ENCODE measurements at regions of chr2 and their contacts with region 1.

Region 1: GRCh38 chr2:174174741-174175140 is 73.6 kb downstream of the OLA1 start:
- DNase-seq: no peak
- ATAC-seq: no peak
- H3K4me3 ChIP-seq: no peak overlapping the region
- H3K27ac ChIP-seq: no peak overlapping the region
- H3K4me1 ChIP-seq: no peaks in the 10 kb centered on the region
- H3K27me3 ChIP-seq: no peaks in the 10 kb centered on the region
- CTCF ChIP-seq: no peak

Region 2: GRCh38 chr2:174198822-174199564 is 24.3 kb after region 1 on chr2:
- CTCF ChIA-PET with region 1: interaction called, 14 read pairs
- POLR2A ChIA-PET with region 1: no interaction called
- intact Hi-C with region 1: no loop called
- DNase-seq: peak; percentile 18
- ATAC-seq: peak; percentile 83
- H3K4me3 ChIP-seq: no peak overlapping the region
- H3K27ac ChIP-seq: no peak overlapping the region
- H3K4me1 ChIP-seq: no peaks in the 10 kb centered on the region
- H3K27me3 ChIP-seq: no peaks in the 10 kb centered on the region
- CTCF ChIP-seq: no peak

Measured in PC-3 (cell line).